Activated B cell treated with CpG ODN at 0.5 μM for 24 hours (primary cell): ENCODE measurements at regions of chr5 and their contacts with region 1.

Region 1: DNA sequence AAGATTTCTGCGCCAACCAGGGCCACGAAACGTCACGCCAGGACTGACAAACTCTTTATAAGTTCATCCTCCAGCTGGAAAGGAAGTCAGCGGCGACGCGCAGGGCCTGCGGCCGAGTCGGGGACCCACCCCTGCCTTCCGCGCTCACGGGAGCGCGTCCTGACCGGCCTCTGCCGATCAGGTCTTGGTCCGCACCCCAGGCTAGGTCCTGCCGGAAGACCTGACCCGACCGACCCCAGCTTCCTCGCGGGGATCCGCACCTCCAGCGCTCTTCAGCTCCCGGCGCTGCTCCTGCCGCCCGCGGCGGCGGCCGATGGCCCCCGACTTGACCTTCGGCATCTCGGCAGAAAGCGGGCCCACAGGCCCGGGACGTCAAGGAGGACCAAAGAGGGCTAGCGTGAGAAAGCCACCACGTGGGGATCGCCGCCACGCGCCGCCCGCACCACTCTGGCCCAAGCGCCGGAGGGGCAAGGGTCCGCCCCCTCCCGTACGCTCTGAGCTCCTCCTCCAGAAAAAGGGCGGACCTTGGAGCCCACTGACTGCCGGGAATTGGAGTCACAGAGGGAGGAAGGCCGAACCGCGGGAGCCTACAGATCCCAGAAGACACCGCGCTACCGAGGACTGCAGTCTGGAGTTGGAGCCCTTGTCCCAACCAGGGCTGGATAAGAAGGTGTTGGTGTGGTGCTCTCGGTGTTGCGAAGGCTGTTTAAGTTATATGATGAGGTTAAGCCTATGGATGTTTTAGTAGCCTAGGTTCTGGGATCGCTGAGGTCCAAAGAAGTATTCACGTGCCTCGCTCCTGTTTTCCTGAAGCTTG is at the start of gene DIMT1:
- DNase-seq: peak; percentile 86
- ATAC-seq: peak; percentile 97
- H3K4me3 Mint-ChIP-seq: peak within 1 kb of the TSS; percentile 94
- H3K27ac Mint-ChIP-seq: peak within 1 kb of the TSS; percentile 89
- H3K4me1 Mint-ChIP-seq: peaks cover 23% of the 10 kb centered on the region
- H3K27me3 Mint-ChIP-seq: no peaks in the 10 kb centered on the region
- CTCF ChIP-seq: no peak
- total RNA-seq, gene DIMT1: 28.2 and 28.7 TPM in 2 replicates

Region 2: DNA sequence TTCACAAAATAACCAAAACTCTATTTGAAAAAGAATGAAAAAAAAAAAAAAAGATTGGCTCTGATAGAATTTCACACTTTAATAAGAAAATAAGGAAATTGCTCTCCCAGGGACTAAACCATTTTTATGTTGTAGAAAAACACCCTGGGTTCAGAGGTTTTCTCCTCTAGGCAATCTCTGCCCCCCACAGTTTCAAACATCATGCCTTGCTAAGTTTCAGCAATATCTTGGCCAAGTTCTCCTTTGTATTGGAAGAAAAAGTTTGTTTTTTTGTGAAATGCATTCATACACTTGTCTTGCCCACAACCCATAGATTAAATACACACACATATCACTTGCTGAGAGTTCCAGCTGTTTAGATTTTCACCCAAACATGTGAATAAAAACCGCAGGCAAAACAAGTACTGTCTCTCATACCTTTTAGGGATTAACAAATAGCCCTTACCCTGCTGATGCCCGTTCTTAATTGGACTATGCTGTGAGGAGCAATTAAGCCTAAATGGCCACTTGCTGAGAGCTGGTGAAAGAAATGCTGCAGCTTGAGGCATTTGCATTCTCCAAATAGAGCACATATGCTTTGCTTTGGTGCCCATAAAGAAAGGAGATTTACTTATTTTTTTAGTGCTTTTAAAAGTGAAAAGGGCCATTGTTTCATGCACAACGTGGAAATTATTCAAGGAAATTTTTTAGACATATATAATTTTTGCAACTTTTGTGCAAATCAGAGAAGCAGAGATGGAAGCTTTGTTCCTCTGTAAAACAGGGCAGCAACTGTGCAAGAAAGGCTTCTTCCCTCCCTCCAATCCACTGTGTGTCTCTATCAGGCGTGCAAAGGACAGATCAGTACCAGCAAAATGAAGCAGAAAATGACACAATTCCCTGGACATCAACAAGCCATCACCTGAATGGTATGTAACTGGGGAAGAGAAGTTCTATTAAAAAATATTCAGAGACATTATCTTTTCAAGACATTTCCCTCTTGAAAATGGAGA is 360.1 kb before region 1 on chr5:
- CTCF ChIA-PET with region 1: no interaction called
- POLR2A ChIA-PET with region 1: no interaction called
- intact Hi-C with region 1: no loop called
- DNase-seq: no peak
- ATAC-seq: no peak
- H3K4me3 Mint-ChIP-seq: no peak overlapping the region
- H3K27ac Mint-ChIP-seq: no peak overlapping the region
- H3K4me1 Mint-ChIP-seq: no peaks in the 10 kb centered on the region
- H3K27me3 Mint-ChIP-seq: peaks cover 4% of the 10 kb centered on the region
- CTCF ChIP-seq: no peak

Region 3: GRCh38 chr5:62340392-62340791 is 63.2 kb before region 1 on chr5:
- CTCF ChIA-PET with region 1: interaction called, 3 read pairs
- POLR2A ChIA-PET with region 1: interaction called, 10 read pairs
- intact Hi-C with region 1: no loop called
- DNase-seq: no peak
- ATAC-seq: no peak
- H3K4me3 Mint-ChIP-seq: no peak overlapping the region
- H3K27ac Mint-ChIP-seq: no peak overlapping the region
- H3K4me1 Mint-ChIP-seq: peaks cover 35% of the 10 kb centered on the region
- H3K27me3 Mint-ChIP-seq: no peaks in the 10 kb centered on the region
- CTCF ChIP-seq: no peak

Region 4: DNA sequence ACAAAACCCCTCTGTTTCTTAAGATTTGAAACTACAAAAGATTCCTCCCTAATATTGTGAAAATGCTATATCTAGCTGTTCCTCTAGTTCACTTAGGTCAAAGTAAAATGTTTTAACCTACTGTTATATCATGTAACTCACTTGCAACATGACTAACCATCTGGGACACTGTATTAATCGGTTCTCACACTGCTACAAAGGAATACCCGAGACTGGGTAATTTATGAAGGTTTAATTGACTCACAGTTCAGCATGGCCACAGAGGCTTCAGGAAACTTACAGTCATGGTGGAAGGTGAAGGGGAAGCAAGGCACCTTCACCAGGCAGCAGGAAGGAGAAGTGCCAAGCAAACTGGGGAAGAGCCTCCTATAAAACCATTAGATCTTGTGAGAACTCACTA is 34.6 kb before region 1 on chr5:
- CTCF ChIA-PET with region 1: no interaction called
- POLR2A ChIA-PET with region 1: no interaction called
- intact Hi-C with region 1: loop called (anchors 5 kb)
- DNase-seq: no peak
- ATAC-seq: no peak
- H3K4me3 Mint-ChIP-seq: no peak overlapping the region
- H3K27ac Mint-ChIP-seq: no peak overlapping the region
- H3K4me1 Mint-ChIP-seq: no peaks in the 10 kb centered on the region
- H3K27me3 Mint-ChIP-seq: no peaks in the 10 kb centered on the region
- CTCF ChIP-seq: no peak